Heart left ventricle (tissue), 16 donors: ENCODE measurements at regions of chr11 and their contacts with region 1.

Region 1: GRCh38 chr11:94876645-94877442 is 96.5 kb downstream of the CWC15 start:
- DNase-seq: peak; percentile 78 to 86 (median 83)
- ATAC-seq: peak; percentile 75 to 98 (median 92)
- H3K4me3 ChIP-seq: no peak overlapping the region
- H3K27ac ChIP-seq: peak overlapping the region; percentile 17 to 80 (median 66)
- H3K4me1 ChIP-seq: peaks cover 0 to 23% (median 15%) of the 10 kb centered on the region in 12 donors
- H3K27me3 ChIP-seq: no peaks in the 10 kb centered on the region
- CTCF ChIP-seq: peak in 10 of 12 donors; percentile 15 to 58 (median 33)
- POLR2A ChIP-seq: no peak

Region 2: DNA sequence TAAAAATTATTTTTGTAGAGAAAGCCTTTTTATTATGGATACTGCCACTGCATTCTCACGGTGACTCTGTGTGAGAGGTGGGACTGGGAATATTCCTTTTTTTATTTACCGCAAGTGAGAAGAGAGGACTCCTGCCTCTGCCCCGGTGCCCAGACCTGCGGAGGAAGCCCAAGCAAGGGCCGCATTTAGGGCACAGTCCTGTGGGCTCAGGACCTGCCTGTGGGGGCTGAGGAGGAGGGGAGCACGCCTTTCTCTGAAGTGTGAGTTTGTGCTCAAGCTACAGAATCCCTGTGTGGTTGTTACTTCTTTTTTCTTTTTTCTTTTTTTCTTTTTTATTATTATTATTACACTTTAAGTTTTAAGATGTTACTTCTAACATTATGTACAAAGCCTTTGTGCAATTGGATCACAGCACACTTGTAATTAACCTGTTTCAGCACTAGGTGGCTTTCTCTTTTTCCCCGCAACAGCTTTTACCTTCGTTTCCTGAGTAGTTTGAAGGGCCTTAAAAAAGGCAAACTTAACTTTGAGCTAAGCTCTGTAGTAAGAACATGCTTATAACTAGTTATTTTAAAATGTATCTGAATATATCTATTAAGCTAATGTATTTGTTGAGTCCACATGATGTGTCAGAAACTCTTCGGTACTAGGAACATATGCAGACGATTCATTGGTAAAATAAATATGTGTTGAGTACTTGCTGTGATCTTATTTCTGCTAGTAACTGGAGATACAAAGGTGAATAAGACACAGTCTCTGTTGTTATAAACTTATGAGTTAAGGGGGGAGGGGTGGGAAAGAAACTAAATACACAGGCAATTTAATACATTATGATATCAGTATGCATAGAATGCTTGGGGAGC is 90.3 kb before region 1 on chr11:
- intact Hi-C with region 1: loop called in 1 of 10 experiments (anchors 10 kb)
- DNase-seq: no peak
- ATAC-seq: no peak
- H3K4me3 ChIP-seq: no peak overlapping the region
- H3K27ac ChIP-seq: no peak overlapping the region
- H3K4me1 ChIP-seq: peaks cover 2 to 93% (median 55%) of the 10 kb centered on the region in 12 donors
- H3K27me3 ChIP-seq: no peaks in the 10 kb centered on the region
- CTCF ChIP-seq: peak; percentile 45 to 72 (median 59)
- POLR2A ChIP-seq: no peak

Region 3: DNA sequence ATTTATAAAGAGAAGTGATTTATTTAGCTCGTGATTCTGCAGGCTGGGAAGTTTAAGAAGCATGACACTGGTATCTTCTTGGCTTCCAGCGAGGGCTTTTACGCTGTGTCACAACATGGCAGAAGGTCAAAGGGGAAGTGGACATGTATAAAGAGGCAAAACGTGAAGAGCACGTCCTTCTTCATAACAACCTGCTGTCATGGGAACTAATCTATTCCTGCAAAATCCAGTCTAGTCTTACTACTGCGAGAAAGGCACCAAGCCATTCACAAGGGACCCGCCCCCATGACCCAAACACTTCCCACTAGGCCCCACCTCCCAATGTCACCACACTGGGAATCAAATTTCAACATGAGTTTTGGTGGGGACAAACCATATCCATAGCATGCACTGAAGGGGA is 50.4 kb before region 1 on chr11:
- intact Hi-C with region 1: loop called in 2 of 10 experiments (anchors 5 to 10 kb)
- DNase-seq: no peak
- ATAC-seq: no peak
- H3K4me3 ChIP-seq: no peak overlapping the region
- H3K27ac ChIP-seq: no peak overlapping the region
- H3K4me1 ChIP-seq: peaks cover 0 to 16% (median 0%) of the 10 kb centered on the region in 12 donors
- H3K27me3 ChIP-seq: no peaks in the 10 kb centered on the region
- CTCF ChIP-seq: no peak
- POLR2A ChIP-seq: no peak

Region 4: DNA sequence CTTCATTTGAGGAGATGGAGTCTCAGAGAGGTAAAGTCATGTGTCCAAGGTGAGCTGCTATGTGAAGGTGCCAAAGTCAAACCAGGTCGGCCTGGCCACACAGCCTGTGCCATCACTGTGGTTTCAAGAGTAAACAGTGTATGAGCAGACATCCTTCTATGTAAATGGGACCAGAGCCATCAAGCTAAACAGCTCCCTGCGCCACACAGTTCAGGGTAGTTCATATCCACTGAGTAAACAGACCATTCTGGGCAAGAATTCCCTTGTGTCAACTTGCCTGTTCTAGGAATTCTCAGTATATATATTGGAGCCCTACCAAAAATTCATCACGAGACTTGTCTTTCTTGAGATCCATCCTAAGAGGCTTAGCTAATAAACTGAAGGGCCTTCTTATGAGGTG is 31.2 kb before region 1 on chr11:
- intact Hi-C with region 1: loop called in 1 of 10 experiments (anchors 5 kb)
- DNase-seq: no peak
- ATAC-seq: peak in 2 of 4 donors; percentile 19 to 27
- H3K4me3 ChIP-seq: no peak overlapping the region
- H3K27ac ChIP-seq: peak overlapping the region in 1 of 12 donors; percentile 65
- H3K4me1 ChIP-seq: peaks cover 0 to 16% (median 2%) of the 10 kb centered on the region in 12 donors
- H3K27me3 ChIP-seq: peaks cover 0 to 5% (median 0%) of the 10 kb centered on the region in 9 donors
- CTCF ChIP-seq: no peak
- POLR2A ChIP-seq: no peak

Region 5: GRCh38 chr11:94926698-94927237 is 49.9 kb after region 1 on chr11:
- intact Hi-C with region 1: loop called in 1 of 10 experiments (anchors 10 kb)
- DNase-seq: peak; percentile 89 to 91 (median 89)
- ATAC-seq: peak; percentile 72 to 95 (median 94)
- H3K4me3 ChIP-seq: no peak overlapping the region
- H3K27ac ChIP-seq: peak overlapping the region; percentile 65 to 90 (median 78)
- H3K4me1 ChIP-seq: peaks cover 8 to 50% (median 41%) of the 10 kb centered on the region in 12 donors
- H3K27me3 ChIP-seq: no peaks in the 10 kb centered on the region
- CTCF ChIP-seq: peak in 1 of 12 donors; percentile 17
- POLR2A ChIP-seq: no peak

Region 6: DNA sequence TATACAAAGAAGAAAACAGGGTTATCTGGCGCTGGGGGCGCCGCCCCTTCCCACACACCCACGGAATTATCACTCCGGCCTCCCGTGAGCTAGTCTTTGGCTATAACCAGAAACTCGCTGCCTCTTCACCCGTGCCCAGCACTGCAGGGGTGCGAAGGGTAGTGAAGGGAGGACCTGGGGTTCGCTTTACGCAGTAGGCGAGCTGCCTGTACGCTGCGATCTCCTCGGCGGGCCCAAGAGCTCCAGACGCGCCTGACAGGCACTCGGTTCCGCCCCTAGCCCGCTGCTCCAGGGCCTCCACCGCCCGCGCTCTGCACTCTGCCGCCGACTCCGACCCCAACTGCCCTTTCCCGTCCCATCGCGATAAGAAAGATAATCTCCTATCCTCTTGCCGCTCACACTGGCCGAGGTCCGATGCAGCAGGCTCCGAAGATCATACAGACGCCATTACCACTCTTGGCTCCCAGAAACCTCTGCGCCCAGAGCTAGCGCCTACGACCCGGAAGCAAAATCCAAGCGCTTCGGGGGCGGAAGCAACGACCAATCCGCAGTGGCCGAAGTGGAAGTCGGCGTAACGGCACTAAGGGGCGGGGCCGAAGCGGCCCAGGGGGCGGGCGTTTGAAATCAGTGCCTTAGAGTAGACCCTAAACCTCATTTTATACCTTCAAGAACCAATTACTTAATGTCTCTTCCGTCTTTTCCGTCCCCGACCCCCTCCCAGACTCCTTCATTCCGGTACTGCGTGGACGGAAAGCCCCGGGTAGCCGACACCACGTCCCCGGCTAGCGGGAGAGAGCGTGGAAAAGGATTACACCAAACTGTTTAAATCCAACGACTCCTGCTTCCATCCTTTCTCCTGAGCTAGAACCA is 96.5 kb after region 1 on chr11 and contains the starts of genes CWC15 and KDM4D:
- intact Hi-C with region 1: loop called in 1 of 10 experiments (anchors 10 kb)
- DNase-seq: peak; percentile 96
- ATAC-seq: peak; percentile 99 to 100 (median 100)
- H3K4me3 ChIP-seq: peak within 1 kb of the TSS; percentile 71 to 93 (median 87)
- H3K27ac ChIP-seq: peak within 1 kb of the TSS in 11 of 12 donors; percentile 57 to 89 (median 80)
- H3K4me1 ChIP-seq: peaks cover 4 to 19% (median 12%) of the 10 kb centered on the region in 12 donors
- H3K27me3 ChIP-seq: no peaks in the 10 kb centered on the region
- CTCF ChIP-seq: peak in 1 of 12 donors; percentile 15
- POLR2A ChIP-seq: no peak
- total RNA-seq, gene CWC15: 54.4 to 81.8 (median 62.6) TPM
- total RNA-seq, gene KDM4D: 0.65 to 1.3 (median 0.95) TPM in 8 of 9 donors, not detected in the other